Heart left ventricle (tissue), 16 donors: ENCODE measurements at regions of chr6 and their contacts with region 1.

Region 1: GRCh38 chr6:20056350-20056992 is 155.8 kb downstream of the MBOAT1 start:
- DNase-seq: no peak
- ATAC-seq: peak in 2 of 4 donors; percentile 24 to 51
- H3K4me3 ChIP-seq: no peak overlapping the region
- H3K27ac ChIP-seq: no peak overlapping the region
- H3K4me1 ChIP-seq: no peaks in the 10 kb centered on the region
- H3K27me3 ChIP-seq: no peaks in the 10 kb centered on the region
- CTCF ChIP-seq: peak; percentile 21 to 67 (median 44)
- POLR2A ChIP-seq: no peak

Region 2: DNA sequence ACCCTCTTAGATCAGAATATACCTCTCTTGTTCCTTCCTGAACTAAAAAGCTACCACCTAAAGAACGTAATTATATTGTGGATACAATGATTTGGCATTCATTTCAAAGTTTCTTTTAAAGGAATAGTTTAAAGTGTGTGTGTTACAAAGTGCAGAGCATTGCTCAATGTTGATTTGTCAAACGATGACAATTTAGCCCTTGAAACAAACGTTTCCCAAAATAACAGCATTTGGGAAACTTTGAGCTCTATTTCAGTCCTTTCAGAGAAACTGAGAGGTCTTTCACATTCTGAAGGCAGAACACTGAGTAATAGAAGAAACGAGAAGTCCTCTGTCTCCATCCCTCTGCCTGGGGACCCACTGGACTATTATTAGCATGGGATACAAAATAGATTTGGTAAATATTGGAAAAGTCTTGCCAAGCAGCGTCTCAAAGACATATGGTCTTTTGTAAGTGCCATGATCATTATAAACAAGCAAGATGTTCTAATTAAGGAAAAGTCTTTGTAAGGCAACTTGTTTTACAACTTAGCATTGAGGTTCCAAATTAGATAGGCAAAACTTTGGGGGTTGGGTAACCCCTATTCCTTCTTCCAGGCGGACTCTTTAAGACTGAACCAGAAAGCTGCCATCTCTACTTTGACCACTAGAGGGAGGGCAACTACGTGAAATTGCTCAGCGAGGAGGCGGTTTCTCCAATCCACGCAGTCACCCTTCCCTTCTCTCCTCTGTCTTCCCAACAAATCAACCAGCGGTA is 1460.5 kb before region 1 on chr6:
- intact Hi-C with region 1: loop called (anchors 2 to 10 kb)
- DNase-seq: peak in 3 of 5 donors; percentile 27 to 51 (median 50)
- ATAC-seq: peak; percentile 47 to 83 (median 76)
- H3K4me3 ChIP-seq: peak overlapping the region in 2 of 12 donors; percentile 12 to 22
- H3K27ac ChIP-seq: peak overlapping the region in 1 of 12 donors; percentile 24
- H3K4me1 ChIP-seq: peaks cover 0 to 7% (median 0%) of the 10 kb centered on the region in 12 donors
- H3K27me3 ChIP-seq: no peaks in the 10 kb centered on the region
- CTCF ChIP-seq: peak; percentile 85 to 95 (median 90)
- POLR2A ChIP-seq: no peak

Region 3: GRCh38 chr6:18752278-18753068 is 1304.0 kb before region 1 on chr6:
- intact Hi-C with region 1: loop called in 3 of 10 experiments (anchors 5 to 10 kb)
- DNase-seq: no peak
- ATAC-seq: no peak
- H3K4me3 ChIP-seq: no peak overlapping the region
- H3K27ac ChIP-seq: no peak overlapping the region
- H3K4me1 ChIP-seq: no peaks in the 10 kb centered on the region
- H3K27me3 ChIP-seq: no peaks in the 10 kb centered on the region
- CTCF ChIP-seq: no peak
- POLR2A ChIP-seq: no peak

Region 4: DNA sequence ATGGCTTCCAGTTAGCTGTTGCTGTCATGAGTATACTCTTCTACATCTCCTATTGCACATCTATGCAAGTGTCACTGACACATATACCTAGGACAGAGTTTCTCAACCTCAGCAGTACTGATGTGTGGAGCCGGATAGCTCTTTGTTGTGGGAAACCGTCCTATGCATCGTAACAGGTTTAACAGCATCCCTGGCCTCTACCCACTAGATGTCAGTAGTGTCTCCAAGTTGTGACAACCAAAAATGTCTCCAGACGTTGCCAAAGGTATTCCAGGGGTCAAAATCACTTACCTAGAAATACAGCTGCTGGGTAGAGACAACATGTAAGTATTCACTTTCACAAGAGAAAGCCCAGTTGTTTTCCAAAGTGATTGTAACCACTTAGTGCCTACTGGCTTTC is 1031.7 kb before region 1 on chr6:
- intact Hi-C with region 1: loop called in 3 of 10 experiments (anchors 10 kb)
- DNase-seq: no peak
- ATAC-seq: peak; percentile 61 to 88 (median 71)
- H3K4me3 ChIP-seq: no peak overlapping the region
- H3K27ac ChIP-seq: no peak overlapping the region
- H3K4me1 ChIP-seq: peaks cover 0 to 3% (median 0%) of the 10 kb centered on the region in 12 donors
- H3K27me3 ChIP-seq: no peaks in the 10 kb centered on the region
- CTCF ChIP-seq: peak; percentile 13 to 68 (median 52)
- POLR2A ChIP-seq: no peak

Region 5: DNA sequence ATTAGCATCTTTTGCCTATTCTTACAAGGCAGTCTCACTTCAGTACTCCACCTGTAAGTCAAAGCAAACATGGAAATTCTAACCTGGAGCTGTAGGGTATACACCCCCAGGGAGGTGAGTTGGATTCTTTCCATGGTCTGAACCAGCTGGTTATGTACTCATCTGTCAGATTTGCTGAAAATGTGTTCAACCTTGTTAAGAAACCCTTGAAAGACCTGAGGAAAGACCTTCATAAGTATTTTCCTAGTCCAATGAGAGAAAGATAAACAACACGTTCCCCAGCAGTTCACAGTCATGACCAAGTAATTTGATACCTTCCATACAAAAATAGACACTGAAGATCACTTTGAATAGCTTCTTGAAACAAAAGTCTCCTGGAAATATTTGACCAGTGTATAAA is 176.8 kb before region 1 on chr6:
- intact Hi-C with region 1: no loop called
- DNase-seq: no peak
- ATAC-seq: no peak
- H3K4me3 ChIP-seq: no peak overlapping the region
- H3K27ac ChIP-seq: no peak overlapping the region
- H3K4me1 ChIP-seq: no peaks in the 10 kb centered on the region
- H3K27me3 ChIP-seq: no peaks in the 10 kb centered on the region
- CTCF ChIP-seq: no peak
- POLR2A ChIP-seq: no peak